Vagina (tissue), 2 donors: ENCODE measurements at regions of chr10 and their contacts with region 1.

Region 1: DNA sequence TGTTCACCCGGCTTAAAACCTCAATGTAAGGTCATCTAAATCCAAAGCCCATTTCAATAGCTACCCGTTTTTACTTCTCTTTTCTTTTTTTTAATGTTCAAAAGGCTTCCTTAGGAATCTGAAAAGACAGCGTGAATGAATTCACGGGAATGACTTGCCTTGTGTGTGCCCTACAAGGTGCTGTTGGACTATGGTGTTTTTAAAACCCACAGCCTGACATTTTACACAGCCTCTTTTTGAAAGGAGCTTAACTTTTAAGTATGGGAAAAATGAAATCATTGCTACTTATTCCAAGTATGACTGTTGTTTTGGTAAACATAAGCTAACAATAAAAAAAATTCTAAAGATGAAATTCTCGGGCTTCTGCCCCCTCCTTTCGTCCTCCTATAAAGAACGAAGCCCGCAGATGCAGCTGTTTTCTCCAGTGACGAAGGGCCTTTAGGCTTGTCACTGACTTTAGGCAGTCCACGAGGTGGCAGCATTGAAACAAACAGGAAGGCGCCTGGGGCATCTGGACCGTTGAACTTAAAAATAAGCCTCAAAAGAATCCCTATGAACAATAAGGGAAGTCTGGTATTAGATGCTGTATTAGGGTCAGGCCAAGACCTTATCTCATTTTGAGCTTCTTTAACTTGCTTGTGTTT is 141.3 kb downstream of the NRP1 start:
- DNase-seq: no peak
- H3K4me3 ChIP-seq: no peak overlapping the region
- H3K27ac ChIP-seq: peak overlapping the region; percentile 54
- H3K4me1 ChIP-seq: peaks cover 47% of the 10 kb centered on the region
- H3K27me3 ChIP-seq: no peaks in the 10 kb centered on the region
- CTCF ChIP-seq: peak; percentile 19 to 79 (median 72)
- POLR2A ChIP-seq: no peak

Region 2: DNA sequence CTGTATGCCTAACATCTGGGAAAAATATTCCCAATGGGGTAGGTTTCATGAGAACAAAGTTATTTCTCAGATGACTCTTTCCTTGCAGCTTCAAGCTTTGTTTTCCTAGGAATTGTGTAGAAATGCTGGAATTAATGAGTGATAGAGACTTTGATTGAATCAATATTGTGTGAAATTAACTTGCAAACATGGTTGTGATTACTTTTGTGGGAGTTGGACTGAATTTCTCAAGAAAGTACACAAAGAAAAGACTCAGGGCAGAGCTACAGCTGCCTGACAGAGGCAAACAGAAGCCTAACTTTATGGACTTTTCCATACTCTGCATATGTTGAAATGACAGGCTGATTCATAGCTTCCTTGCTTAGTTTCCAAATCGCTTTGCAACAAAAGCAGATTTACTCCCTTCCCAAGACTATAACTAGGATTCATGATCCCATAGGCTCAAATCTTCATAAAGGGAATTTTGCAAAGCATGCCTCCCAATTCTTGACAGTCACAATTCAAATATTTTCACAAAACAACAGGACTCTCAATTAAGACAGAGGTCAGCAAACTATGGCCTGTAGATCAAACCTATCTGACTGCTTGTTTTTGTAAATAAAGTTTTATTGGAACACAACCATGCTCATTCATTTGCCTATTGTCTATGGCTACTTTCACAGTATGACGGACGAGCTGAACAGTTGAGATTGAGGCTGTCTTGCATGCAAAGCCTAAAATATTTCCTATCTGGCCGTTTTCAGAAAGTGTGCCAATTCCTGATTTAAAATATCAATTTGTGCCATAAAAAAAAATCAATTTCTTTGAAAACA is 113.7 kb after region 1 on chr10:
- intact Hi-C with region 1: no loop called
- DNase-seq: no peak
- H3K4me3 ChIP-seq: no peak overlapping the region
- H3K27ac ChIP-seq: no peak overlapping the region
- H3K4me1 ChIP-seq: peaks cover 26% of the 10 kb centered on the region
- H3K27me3 ChIP-seq: no peaks in the 10 kb centered on the region
- CTCF ChIP-seq: no peak
- POLR2A ChIP-seq: no peak

Region 3: GRCh38 chr10:34102237-34102673 is 909.1 kb after region 1 on chr10:
- intact Hi-C with region 1: loop called (anchors 5 kb)
- DNase-seq: peak in 1 of 2 donors; percentile 97
- H3K4me3 ChIP-seq: no peak overlapping the region
- H3K27ac ChIP-seq: peak overlapping the region; percentile 41
- H3K4me1 ChIP-seq: peaks cover 47% of the 10 kb centered on the region
- H3K27me3 ChIP-seq: no peaks in the 10 kb centered on the region
- CTCF ChIP-seq: no peak
- POLR2A ChIP-seq: no peak